GM10248 (cell line): ENCODE measurements at regions of chr4 and their contacts with region 1.

Region 1: GRCh38 chr4:152591396-152591795 is 55.5 kb upstream of the FBXW7 start:
- DNase-seq: peak; percentile 29
- CTCF ChIP-seq: no peak

Region 2: GRCh38 chr4:152577708-152578396 is 13.5 kb before region 1 on chr4:
- CTCF ChIA-PET with region 1: interaction called, 24 read pairs
- POLR2A ChIA-PET with region 1: no interaction called
- DNase-seq: no peak
- CTCF ChIP-seq: no peak

Region 3: DNA sequence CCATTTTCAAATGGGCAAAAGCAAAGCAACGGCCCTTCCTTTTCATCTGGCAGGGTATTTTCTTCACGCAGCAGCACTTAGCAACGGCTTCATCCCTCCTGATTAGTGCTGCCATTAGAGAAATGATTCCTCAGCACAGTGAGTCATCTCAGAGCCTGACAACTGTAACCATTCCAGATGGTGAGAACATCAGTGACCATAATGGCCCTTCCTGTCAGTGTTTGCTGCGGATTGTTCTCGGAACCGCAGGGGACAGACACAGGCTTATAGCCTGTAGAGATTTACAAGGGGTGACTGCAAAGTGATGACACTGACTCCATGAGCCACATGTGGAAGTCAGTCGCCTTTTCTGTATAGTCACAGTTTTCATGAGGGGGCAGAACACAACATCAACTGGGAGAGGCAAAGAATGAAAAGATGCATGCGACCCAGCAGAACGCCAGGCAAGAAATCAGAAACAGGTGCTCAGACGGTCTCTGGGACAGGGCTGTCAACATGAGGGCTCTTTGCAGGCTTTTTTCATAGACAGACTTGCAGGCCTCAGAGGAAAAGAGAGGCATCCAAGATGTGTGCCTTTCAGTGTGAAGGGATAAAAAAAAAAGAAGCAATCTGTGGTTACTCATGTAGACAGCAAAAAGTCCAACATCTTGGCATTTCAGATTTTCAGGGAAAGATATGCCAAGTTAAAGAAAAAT is 14.4 kb after region 1 on chr4:
- CTCF ChIA-PET with region 1: interaction called, 11 read pairs
- POLR2A ChIA-PET with region 1: no interaction called
- DNase-seq: no peak
- CTCF ChIP-seq: no peak

Region 4: DNA sequence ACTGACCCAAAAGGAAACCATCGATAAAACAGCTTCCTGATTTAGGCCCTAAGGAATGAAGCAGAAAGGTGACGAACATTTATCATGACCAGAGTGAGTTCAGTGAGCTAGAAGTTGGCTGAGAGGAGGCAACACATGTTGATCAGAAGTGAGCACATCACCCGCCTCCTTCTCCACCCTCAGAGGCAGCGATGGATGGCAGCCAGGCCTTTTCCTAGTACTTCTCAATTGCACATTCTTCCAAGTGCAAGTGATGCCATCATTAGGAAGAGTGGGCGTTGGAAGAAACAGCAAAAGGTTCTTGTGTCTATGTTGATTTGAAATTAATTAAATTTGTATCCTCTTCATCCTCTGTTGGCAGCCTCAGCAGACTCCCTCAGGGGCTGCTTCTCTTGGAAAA is 36.7 kb after region 1 on chr4:
- CTCF ChIA-PET with region 1: interaction called, 10 read pairs
- POLR2A ChIA-PET with region 1: no interaction called
- DNase-seq: no peak
- CTCF ChIP-seq: no peak

Region 5: DNA sequence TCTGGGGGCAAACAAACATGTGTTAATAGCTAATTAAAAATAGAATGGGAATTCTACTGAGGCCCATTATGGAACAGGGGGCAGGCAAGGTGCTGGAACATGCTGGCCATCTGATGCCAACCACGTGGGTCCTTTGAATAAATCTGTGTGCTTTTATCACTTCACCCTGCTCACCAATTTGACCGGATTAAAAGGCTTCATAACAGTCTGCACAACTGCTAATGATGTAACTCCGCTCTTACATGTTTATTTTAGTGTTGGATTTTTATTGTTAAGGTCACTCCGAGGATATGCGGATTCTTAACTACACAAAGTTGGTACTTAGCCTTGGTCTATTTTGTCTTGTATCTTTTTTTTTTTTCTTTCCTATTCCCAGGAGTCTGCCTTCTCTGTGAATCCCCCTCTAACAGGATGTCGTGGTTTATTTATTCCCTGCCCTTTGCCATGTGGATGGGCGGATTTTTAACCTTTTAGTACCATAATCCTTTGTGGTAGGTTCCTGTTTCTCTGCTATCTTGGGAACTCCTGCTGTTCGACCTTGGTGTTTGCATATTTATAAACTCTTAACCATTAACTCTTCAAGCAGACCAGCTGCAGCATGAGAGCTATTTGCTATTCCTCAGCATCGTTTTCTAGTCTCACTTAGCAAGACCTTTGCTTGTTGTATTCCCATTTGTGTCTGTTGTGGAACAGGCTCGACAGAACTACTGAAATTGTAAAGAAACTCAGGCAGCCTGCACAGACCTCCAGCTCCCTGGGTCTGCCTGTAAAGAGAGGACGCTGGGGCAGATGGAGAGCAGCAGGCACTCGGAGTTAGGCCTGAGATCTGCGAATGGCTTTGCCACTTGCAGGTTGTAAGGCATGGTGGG is 650.8 kb after region 1 on chr4:
- CTCF ChIA-PET with region 1: no interaction called
- POLR2A ChIA-PET with region 1: no interaction called
- DNase-seq: no peak
- CTCF ChIP-seq: no peak